ENCODE measurements at regions of chr1 and their contacts with region 1.

Region 1: GRCh38 chr1:205591522-205592351 is 40.1 kb downstream of the ELK4 start:
- DNase-seq: peak; percentile 95
- ATAC-seq: peak; percentile 93
- H3K4me3 Mint-ChIP-seq: peak overlapping the region; percentile 84
- H3K27ac Mint-ChIP-seq: peak overlapping the region; percentile 93
- H3K4me1 Mint-ChIP-seq: peaks cover 38% of the 10 kb centered on the region
- H3K27me3 Mint-ChIP-seq: no peaks in the 10 kb centered on the region
- CTCF ChIP-seq: peak; percentile 96

Region 2: DNA sequence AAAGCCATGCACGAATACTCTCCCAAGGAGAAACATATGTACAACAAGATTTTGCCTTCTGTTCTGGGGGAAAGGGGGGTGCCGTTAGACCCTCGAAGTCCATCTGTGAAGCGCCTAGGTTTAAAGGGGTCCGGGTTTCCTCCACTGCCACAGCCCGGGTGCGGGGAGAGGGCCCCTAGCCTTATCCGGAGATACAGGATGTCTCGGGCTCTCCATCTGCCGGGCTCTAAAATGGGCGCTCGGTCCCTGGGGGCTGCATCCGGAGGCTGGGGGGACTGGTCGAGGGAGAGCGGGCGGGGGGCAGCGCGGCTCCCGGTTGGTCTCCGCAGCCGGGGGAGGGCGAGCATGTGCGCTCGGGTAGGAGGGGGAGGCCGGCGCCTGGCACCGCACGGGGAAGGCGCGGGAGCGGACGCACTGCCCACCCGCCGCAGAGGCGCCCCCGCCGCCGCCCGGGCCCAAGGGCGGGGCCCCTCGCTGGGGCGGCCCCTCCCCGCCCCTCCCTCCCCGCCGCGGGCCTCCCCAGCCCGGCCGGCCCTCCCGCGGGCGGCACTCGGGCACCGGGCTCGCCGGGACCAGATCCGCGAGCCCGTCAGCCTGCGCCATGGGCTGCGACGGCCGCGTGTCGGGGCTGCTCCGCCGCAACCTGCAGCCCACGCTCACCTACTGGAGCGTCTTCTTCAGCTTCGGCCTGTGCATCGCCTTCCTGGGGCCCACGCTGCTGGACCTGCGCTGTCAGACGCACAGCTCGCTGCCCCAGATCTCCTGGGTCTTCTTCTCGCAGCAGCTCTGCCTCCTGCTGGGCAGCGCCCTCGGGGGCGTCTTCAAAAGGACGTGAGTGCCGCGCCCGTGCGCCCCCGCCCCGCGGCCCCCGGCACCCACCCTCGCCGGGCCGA is 23.0 kb before region 1 on chr1:
- CTCF ChIA-PET with region 1: interaction called, 15 read pairs
- POLR2A ChIA-PET with region 1: no interaction called
- intact Hi-C with region 1: no loop called
- DNase-seq: peak; percentile 25
- ATAC-seq: peak; percentile 60
- H3K4me3 Mint-ChIP-seq: peak overlapping the region; percentile 51
- H3K27ac Mint-ChIP-seq: no peak overlapping the region
- H3K4me1 Mint-ChIP-seq: peaks cover 2% of the 10 kb centered on the region
- H3K27me3 Mint-ChIP-seq: peaks cover 43% of the 10 kb centered on the region
- CTCF ChIP-seq: no peak

Region 3: DNA sequence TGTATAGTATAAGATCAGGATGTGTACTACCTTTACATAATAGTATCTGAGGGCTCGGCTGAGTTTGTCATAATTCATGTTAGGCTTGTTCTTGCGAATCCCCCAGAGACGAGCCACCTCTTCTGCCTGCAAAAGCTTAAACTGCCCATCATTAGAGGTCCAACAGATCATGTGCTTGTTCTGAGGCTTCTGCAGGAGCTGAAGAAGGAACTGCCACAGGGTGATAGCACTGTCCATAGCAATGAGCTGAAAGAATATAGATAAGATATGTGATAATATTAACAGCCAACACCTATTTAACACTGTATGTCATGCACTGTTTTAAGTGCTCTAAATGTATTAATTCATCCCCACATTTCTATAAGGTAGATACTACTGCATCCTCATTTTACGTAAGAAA is 31.9 kb after region 1 on chr1:
- CTCF ChIA-PET with region 1: interaction called, 306 read pairs
- POLR2A ChIA-PET with region 1: interaction called, 3 read pairs
- intact Hi-C with region 1: no loop called
- DNase-seq: no peak
- ATAC-seq: no peak
- H3K4me3 Mint-ChIP-seq: no peak overlapping the region
- H3K27ac Mint-ChIP-seq: no peak overlapping the region
- H3K4me1 Mint-ChIP-seq: peaks cover 51% of the 10 kb centered on the region
- H3K27me3 Mint-ChIP-seq: no peaks in the 10 kb centered on the region
- CTCF ChIP-seq: no peak

Region 4: DNA sequence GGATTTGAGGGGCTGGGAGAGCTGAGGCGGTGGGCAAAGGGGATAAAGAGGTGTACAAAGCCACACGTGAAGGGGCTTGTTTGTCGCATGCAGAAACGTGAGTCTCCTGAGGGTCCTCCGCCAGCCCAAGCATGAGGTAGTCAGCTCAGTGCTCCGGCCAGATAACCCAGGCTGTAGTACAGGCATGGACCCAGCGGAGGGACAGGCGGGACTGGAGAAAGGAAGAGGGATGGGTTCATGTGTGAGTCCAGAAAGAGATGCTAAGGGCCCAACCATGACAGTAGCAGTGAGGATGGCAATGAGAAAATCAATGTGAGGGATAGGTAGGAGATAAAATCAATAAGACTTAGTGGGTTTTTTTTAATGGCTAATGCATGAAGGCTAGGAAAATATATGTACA is 53.8 kb after region 1 on chr1:
- CTCF ChIA-PET with region 1: interaction called, 16 read pairs
- POLR2A ChIA-PET with region 1: interaction called, 4 read pairs
- intact Hi-C with region 1: no loop called
- DNase-seq: no peak
- ATAC-seq: no peak
- H3K4me3 Mint-ChIP-seq: no peak overlapping the region
- H3K27ac Mint-ChIP-seq: no peak overlapping the region
- H3K4me1 Mint-ChIP-seq: no peaks in the 10 kb centered on the region
- H3K27me3 Mint-ChIP-seq: peaks cover 3% of the 10 kb centered on the region
- CTCF ChIP-seq: no peak

Region 5: GRCh38 chr1:205858141-205858961 is 266.6 kb after region 1 on chr1:
- CTCF ChIA-PET with region 1: no interaction called
- POLR2A ChIA-PET with region 1: no interaction called
- intact Hi-C with region 1: no loop called
- DNase-seq: no peak
- ATAC-seq: no peak
- H3K4me3 Mint-ChIP-seq: no peak overlapping the region
- H3K27ac Mint-ChIP-seq: no peak overlapping the region
- H3K4me1 Mint-ChIP-seq: peaks cover 4% of the 10 kb centered on the region
- H3K27me3 Mint-ChIP-seq: no peaks in the 10 kb centered on the region
- CTCF ChIP-seq: no peak